ENCODE measurements at regions of chr1 and their contacts with region 1.

Region 1: GRCh38 chr1:174022080-174022975 is at the start of gene RC3H1:
- DNase-seq: peak; percentile 94
- H3K4me3 ChIP-seq: peak within 1 kb of the TSS; percentile 64 to 93 (median 79)
- H3K27ac ChIP-seq: peak within 1 kb of the TSS; percentile 90 to 97 (median 95)
- H3K4me1 ChIP-seq: peaks cover 0 to 51% (median 50%) of the 10 kb centered on the region in 4 donors
- H3K27me3 ChIP-seq: no peaks in the 10 kb centered on the region
- CTCF ChIP-seq: no peak
- EP300 ChIP-seq: no peak
- POLR2A ChIP-seq: peak; percentile 90 to 96
- total RNA-seq, gene RC3H1: 22.5 to 55.9 (median 34.8) TPM

Region 2: DNA sequence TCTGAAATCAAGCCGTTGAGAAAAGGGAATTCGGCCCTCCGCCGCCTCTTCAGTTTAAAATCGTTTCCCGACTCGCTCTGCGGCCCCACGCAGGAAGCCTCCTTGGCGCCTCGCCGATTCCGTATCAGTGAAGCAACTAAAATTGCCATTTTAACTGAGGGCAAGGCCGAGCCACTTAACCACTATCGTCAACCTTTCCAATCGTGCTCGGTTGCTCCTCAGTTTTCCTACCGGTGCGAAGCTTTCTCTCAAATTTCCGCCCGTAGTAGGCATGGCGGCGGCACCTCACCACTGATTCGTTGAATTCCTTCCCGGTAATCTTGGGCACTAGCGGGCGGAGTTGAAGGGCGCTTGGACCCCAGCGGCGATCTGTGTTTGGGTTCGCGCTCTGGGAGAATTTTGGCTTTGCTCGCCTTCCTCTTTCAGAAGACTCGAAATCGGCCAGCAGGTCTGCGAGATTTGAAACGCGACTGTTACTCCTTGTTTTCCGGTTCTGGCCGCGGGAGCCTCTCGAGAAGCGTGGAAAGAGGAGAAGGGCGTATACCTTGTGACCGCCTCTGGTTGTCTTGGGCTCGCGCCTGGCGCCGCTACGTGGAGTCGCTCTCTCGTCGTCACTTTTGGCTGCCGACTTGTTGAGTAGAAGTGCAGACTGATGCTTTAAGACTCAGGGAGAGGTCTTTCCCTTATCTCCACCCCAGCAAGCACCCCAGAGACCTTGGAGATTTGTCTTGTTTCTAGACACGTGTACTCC is 197.8 kb before region 1 on chr1 and contains the starts of genes CENPL and DARS2:
- intact Hi-C with region 1: no loop called
- DNase-seq: peak; percentile 99
- H3K4me3 ChIP-seq: peak within 1 kb of the TSS; percentile 55 to 78 (median 69)
- H3K27ac ChIP-seq: peak within 1 kb of the TSS; percentile 87 to 92 (median 91)
- H3K4me1 ChIP-seq: peaks cover 0 to 25% (median 19%) of the 10 kb centered on the region in 4 donors
- H3K27me3 ChIP-seq: no peaks in the 10 kb centered on the region
- CTCF ChIP-seq: no peak
- EP300 ChIP-seq: peak in 1 of 4 donors; percentile 2
- POLR2A ChIP-seq: no peak
- total RNA-seq, gene CENPL: 3.8 to 7.8 (median 5.4) TPM
- total RNA-seq, gene DARS2: 5.2 to 10.0 (median 7.3) TPM

Region 3: DNA sequence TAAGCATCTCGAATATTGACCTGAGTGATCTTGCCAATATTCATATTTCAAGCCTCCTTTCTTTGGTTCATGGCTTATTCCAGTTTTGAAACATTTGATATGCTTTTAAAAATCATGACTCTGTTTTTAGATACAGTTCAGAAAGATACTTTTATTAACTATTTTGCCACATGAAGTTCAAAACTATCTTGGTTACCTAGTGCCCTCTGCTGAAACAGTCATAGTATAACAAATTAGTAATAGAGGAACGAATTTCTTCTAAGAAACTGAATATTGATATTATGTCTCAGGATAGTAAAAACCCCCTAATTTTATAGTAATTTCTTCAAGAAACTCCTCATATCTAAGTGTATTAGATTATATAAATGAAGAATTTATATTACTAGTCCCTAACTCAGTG is 52.4 kb after region 1 on chr1:
- intact Hi-C with region 1: loop called (anchors 5 kb)
- DNase-seq: no peak
- H3K4me3 ChIP-seq: no peak overlapping the region
- H3K27ac ChIP-seq: no peak overlapping the region
- H3K4me1 ChIP-seq: peaks cover 0 to 7% (median 0%) of the 10 kb centered on the region in 4 donors
- H3K27me3 ChIP-seq: no peaks in the 10 kb centered on the region
- CTCF ChIP-seq: peak in 1 of 4 experiments; percentile 17
- EP300 ChIP-seq: no peak
- POLR2A ChIP-seq: no peak

Region 4: GRCh38 chr1:174159252-174160108 is 137.2 kb after region 1 on chr1 and contains the start of gene RABGAP1L:
- intact Hi-C with region 1: loop called (anchors 1 kb)
- DNase-seq: peak; percentile 96
- H3K4me3 ChIP-seq: peak within 1 kb of the TSS; percentile 80 to 90 (median 84)
- H3K27ac ChIP-seq: peak within 1 kb of the TSS; percentile 86 to 94 (median 90)
- H3K4me1 ChIP-seq: peaks cover 0 to 15% (median 10%) of the 10 kb centered on the region in 4 donors
- H3K27me3 ChIP-seq: no peaks in the 10 kb centered on the region
- CTCF ChIP-seq: no peak
- EP300 ChIP-seq: no peak
- POLR2A ChIP-seq: peak; percentile 74 to 77
- total RNA-seq, gene RABGAP1L: 30.4 to 42.9 (median 36.4) TPM

Region 5: GRCh38 chr1:174999216-174999925 is 977.0 kb after region 1 on chr1:
- intact Hi-C with region 1: loop called (anchors 10 kb)
- DNase-seq: peak; percentile 99
- H3K4me3 ChIP-seq: peak overlapping the region; percentile 72 to 96 (median 90)
- H3K27ac ChIP-seq: peak overlapping the region; percentile 93 to 99 (median 94)
- H3K4me1 ChIP-seq: peaks cover 0 to 44% (median 26%) of the 10 kb centered on the region in 4 donors
- H3K27me3 ChIP-seq: no peaks in the 10 kb centered on the region
- CTCF ChIP-seq: no peak
- EP300 ChIP-seq: peak in 3 of 4 donors; percentile 23 to 54 (median 51)
- POLR2A ChIP-seq: peak; percentile 95

Region 6: GRCh38 chr1:175129997-175130648 is 1107.8 kb after region 1 on chr1:
- intact Hi-C with region 1: loop called (anchors 10 kb)
- DNase-seq: no peak
- H3K4me3 ChIP-seq: no peak overlapping the region
- H3K27ac ChIP-seq: peak overlapping the region; percentile 72 to 82 (median 79)
- H3K4me1 ChIP-seq: peaks cover 0 to 75% (median 66%) of the 10 kb centered on the region in 4 donors
- H3K27me3 ChIP-seq: no peaks in the 10 kb centered on the region
- CTCF ChIP-seq: no peak
- EP300 ChIP-seq: no peak
- POLR2A ChIP-seq: no peak

Measured in sigmoid colon (tissue), 7 donors.